PC-9 (cell line): ENCODE measurements at regions of chr9 and their contacts with region 1.

Region 1: DNA sequence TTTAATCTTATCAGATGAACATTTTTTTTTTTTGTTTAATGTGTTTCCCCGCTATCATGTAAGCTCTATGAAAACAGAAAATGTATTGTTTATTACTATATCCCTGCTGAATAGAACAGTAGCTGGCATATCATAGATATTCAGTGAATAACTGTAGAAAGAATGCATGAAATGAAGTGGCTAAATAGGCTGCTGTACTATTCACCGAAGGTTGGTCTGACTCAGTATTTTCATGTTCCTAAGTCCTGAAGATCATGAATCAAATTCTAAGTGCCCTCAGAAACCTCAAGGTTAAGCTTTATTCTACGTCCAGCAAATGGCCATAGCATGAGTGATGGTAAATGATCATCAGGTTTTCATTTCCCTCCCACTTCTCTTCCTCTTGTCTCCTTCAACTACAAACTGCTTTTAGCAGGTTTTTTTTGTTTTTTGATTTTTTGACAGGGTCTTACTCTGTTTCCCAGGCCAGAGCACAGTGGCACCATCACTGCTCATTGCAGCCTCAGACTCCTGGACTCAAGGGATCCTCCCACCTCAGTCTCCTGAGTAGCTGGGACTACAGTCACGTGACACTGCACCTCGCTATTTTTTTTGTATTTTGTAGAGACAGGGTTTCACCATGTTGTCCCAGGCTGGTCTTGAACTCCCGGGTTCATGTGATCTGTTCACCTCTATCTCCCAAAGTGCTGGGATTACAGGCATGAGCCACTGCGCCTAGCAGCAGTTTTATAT is 19.1 kb upstream of the ZFAND5 start:
- DNase-seq: peak in 1 of 2 experiments; percentile 38
- H3K4me3 ChIP-seq: no peak overlapping the region
- H3K27ac ChIP-seq: no peak overlapping the region
- H3K4me1 ChIP-seq: no peaks in the 10 kb centered on the region
- H3K27me3 ChIP-seq: no peaks in the 10 kb centered on the region
- CTCF ChIP-seq: no peak

Region 2: DNA sequence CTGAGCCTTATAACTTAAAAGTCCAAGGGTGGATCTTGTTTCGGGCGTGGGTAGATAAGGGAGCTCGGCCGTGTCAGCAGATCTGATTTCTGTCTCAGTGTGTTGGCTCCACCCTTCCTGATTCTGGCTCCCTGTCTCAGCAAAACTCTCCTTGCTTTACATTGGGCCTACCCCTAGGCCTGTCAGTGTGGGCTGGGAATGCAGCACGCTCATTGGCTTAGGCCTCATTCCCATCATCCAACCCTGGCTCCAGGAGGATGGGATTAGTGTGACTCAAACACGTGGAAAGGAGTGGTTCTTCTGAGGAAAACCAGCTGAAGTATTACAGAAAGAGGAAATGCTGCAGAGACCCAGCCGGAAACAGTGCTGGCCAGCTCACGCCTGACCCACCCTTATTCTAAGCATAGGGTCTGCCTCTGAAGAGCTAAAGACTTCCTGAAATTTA is 79.0 kb before region 1 on chr9:
- CTCF ChIA-PET with region 1: no interaction called
- POLR2A ChIA-PET with region 1: interaction called, 11 read pairs
- intact Hi-C with region 1: no loop called
- DNase-seq: peak; percentile 88 to 91
- H3K4me3 ChIP-seq: peak overlapping the region; percentile 25; the same call in 1 of the 2 replicates
- H3K27ac ChIP-seq: no peak overlapping the region
- H3K4me1 ChIP-seq: no peaks in the 10 kb centered on the region
- H3K27me3 ChIP-seq: no peaks in the 10 kb centered on the region
- CTCF ChIP-seq: no peak

Region 3: GRCh38 chr9:72473474-72474261 is 89.5 kb after region 1 on chr9:
- CTCF ChIA-PET with region 1: no interaction called
- POLR2A ChIA-PET with region 1: interaction called, 10 read pairs
- intact Hi-C with region 1: no loop called
- DNase-seq: no peak
- H3K4me3 ChIP-seq: no peak overlapping the region
- H3K27ac ChIP-seq: no peak overlapping the region
- H3K4me1 ChIP-seq: peaks cover 31% of the 10 kb centered on the region
- H3K27me3 ChIP-seq: no peaks in the 10 kb centered on the region
- CTCF ChIP-seq: no peak

Region 4: DNA sequence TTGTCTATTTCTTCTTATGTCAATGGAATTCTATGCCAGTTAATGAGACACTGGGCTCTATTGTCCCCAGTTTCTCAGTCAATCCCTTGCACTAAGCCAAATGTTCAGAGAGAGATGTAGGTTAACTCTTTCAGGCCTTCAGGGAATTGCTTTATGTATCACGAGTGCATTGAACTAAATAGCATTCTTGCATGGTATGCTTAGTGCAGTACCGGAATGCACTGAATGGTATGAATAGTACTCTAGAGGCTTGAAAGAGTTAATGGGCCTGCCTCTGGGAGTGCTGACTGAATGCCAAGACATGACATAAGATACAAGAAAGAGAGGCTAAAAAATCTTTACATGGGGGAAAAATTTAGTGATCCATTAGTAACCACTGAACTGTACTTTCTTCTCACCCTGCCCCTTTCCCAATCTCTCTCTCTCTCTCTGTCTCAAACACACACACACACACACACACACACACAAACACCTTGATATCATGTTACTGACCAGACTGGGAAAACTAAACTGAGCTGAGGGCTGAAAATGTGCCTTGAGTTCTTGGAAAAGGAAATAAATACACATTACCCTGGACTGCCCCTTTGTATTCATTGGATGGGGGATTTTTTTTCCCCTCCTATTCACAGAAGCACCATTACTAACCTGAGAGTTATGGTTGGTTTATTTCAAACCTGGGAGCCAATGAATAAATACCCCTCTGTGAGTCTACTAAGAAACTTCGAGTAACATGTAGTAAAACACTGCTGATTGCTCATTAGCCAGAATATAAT is 101.9 kb after region 1 on chr9:
- CTCF ChIA-PET with region 1: no interaction called
- POLR2A ChIA-PET with region 1: no interaction called
- intact Hi-C with region 1: no loop called
- DNase-seq: no peak
- H3K4me3 ChIP-seq: no peak overlapping the region
- H3K27ac ChIP-seq: no peak overlapping the region
- H3K4me1 ChIP-seq: peaks cover 11% of the 10 kb centered on the region
- H3K27me3 ChIP-seq: no peaks in the 10 kb centered on the region
- CTCF ChIP-seq: no peak

Region 5: GRCh38 chr9:72635197-72635596 is 251.1 kb after region 1 on chr9:
- CTCF ChIA-PET with region 1: no interaction called
- POLR2A ChIA-PET with region 1: no interaction called
- intact Hi-C with region 1: no loop called
- DNase-seq: no peak
- H3K4me3 ChIP-seq: no peak overlapping the region
- H3K27ac ChIP-seq: no peak overlapping the region
- H3K4me1 ChIP-seq: no peaks in the 10 kb centered on the region
- H3K27me3 ChIP-seq: no peaks in the 10 kb centered on the region
- CTCF ChIP-seq: no peak

Region 6: DNA sequence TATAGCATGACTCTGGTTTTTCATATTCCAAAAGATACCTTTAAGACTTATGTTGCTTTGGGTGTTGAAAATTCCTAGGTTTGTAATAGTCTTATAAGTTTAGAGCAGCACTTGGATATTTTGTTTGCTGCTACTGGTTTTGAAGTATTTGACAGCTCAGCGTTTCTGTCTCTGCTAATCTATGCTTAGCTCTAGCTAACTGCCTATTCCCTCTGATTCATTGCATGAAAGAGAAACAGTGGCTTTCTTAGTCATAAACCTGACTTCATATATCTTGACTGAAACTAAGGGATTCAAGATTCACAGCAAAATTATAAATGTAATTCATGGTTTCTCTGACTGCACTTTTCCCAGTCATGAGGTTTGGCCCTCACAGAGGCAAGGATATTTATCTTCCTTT is 731.9 kb after region 1 on chr9:
- CTCF ChIA-PET with region 1: no interaction called
- POLR2A ChIA-PET with region 1: interaction called, 17 read pairs
- intact Hi-C with region 1: no loop called
- DNase-seq: no peak
- H3K4me3 ChIP-seq: no peak overlapping the region
- H3K27ac ChIP-seq: peak overlapping the region; percentile 51
- H3K4me1 ChIP-seq: peaks cover 30% of the 10 kb centered on the region
- H3K27me3 ChIP-seq: no peaks in the 10 kb centered on the region
- CTCF ChIP-seq: no peak